GM18951 (cell line): ENCODE measurements at regions of chr6 and their contacts with region 1.

Region 1: GRCh38 chr6:31087494-31088089 is 24.8 kb downstream of the C6orf15 start:
- POLR2A ChIP-seq: no peak

Region 2: GRCh38 chr6:30453508-30454116 is 634.0 kb before region 1 on chr6:
- in situ Hi-C with region 1: loop called (anchors 25 kb)
- POLR2A ChIP-seq: no peak

Region 3: GRCh38 chr6:30759575-30760239 is 327.9 kb before region 1 on chr6:
- in situ Hi-C with region 1: no loop called
- POLR2A ChIP-seq: no peak

Region 4: DNA sequence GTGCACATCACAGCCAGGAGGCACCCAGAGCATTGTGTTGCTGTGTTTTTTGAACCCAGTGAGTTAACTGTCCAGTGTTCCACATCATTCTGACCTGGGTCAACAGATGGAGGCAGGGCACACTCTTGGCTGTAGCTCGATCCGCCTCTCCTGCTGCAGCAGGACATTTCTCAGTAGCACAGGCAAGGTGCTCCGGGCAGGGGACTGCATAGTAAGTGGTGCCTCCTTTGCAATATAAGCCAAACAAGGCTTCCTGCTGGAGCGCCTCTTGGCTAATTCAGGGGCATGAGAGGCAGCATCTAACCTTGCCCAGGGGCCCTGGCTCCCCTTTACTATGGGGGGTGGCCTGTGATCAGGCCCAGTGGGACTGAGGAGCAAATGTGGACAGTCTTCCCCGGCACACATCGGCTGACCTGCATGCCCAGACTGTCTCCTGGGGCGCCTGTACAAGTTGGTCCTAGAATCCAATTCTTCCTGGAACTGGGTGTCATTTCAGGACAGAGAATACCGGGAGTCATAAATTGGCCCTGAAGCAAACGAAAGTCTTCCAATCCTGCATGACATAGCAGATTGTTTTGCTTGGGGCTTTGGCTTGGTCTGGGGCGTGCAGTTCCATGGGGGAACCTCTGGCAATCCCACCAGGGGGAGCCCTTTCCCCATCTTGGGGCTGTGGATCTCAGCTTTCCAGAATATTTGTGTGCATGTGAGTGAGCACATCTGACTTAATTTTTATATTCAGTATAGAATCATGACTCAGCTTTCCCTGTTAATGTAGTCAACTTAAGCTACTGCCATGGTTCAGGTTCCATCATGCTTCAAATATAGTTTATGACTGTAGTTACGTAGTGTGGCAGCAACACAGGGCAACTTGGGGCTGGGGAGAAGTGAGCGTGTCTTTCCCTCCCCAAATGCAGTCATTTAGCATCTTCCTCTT is 259.3 kb before region 1 on chr6:
- in situ Hi-C with region 1: loop called (anchors 10 kb)
- POLR2A ChIP-seq: no peak